ENCODE measurements at regions of chr4 and their contacts with region 1.

Region 1: GRCh38 chr4:68447201-68447600 is at the start of gene TMPRSS11E:
- DNase-seq: no peak
- H3K4me3 ChIP-seq: no peak within 1 kb of the TSS
- H3K27ac ChIP-seq: no peak within 1 kb of the TSS
- H3K4me1 ChIP-seq: no peaks in the 10 kb centered on the region
- H3K27me3 ChIP-seq: no peaks in the 10 kb centered on the region
- CTCF ChIP-seq: no peak
- POLR2A ChIP-seq: no peak
- total RNA-seq, gene TMPRSS11E: 1.3 to 3.3 TPM in 2 of 3 donors, not detected in the other

Region 2: DNA sequence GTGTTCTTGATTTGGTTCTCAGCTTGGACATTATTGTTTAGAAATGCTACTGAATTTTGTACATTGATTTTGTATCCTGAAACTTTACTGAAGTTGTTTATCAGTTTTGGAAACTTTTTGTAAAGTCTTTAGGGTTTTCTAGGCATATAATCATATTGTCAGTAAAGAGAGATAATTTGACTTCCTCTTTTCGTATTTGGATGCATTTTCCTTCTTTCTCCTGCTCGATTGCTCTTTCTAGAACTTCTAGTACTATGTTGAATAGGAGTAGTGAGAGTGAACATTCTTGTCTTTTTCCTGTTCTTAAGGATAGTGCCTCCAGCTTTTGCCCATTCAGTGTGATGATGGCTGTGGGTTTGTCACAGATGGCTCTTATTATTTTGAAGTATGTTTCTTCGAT is 508.0 kb before region 1 on chr4:
- intact Hi-C with region 1: no loop called
- DNase-seq: no peak
- H3K4me3 ChIP-seq: no peak overlapping the region
- H3K27ac ChIP-seq: no peak overlapping the region
- H3K4me1 ChIP-seq: no peaks in the 10 kb centered on the region
- H3K27me3 ChIP-seq: no peaks in the 10 kb centered on the region
- CTCF ChIP-seq: no peak
- POLR2A ChIP-seq: no peak

Region 3: GRCh38 chr4:68349649-68350360 is 97.4 kb before region 1 on chr4 and contains the start of gene YTHDC1:
- intact Hi-C with region 1: no loop called
- DNase-seq: peak; percentile 96 to 97
- H3K4me3 ChIP-seq: peak within 1 kb of the TSS; percentile 82 to 92 (median 92)
- H3K27ac ChIP-seq: peak within 1 kb of the TSS; percentile 98 to 99
- H3K4me1 ChIP-seq: no peaks in the 10 kb centered on the region
- H3K27me3 ChIP-seq: no peaks in the 10 kb centered on the region
- CTCF ChIP-seq: no peak
- POLR2A ChIP-seq: peak; percentile 98
- total RNA-seq, gene YTHDC1: 79.7 to 142 (median 80.3) TPM

Region 4: GRCh38 chr4:70380578-70380977 is 1933.4 kb after region 1 on chr4:
- intact Hi-C with region 1: loop called (anchors 10 kb)
- DNase-seq: no peak
- H3K4me3 ChIP-seq: no peak overlapping the region
- H3K27ac ChIP-seq: no peak overlapping the region
- H3K4me1 ChIP-seq: no peaks in the 10 kb centered on the region
- H3K27me3 ChIP-seq: no peaks in the 10 kb centered on the region
- CTCF ChIP-seq: no peak
- POLR2A ChIP-seq: no peak